ENCODE measurements at regions of chr4 and their contacts with region 1.

Region 1: GRCh38 chr4:152779513-152780266 is at the starts of genes ARFIP1 and TIGD4:
- H3K4me3 Mint-ChIP-seq: peak within 1 kb of the TSS; percentile 99
- H3K27ac Mint-ChIP-seq: peak within 1 kb of the TSS; percentile 98
- H3K4me1 Mint-ChIP-seq: peaks cover 51% of the 10 kb centered on the region
- H3K27me3 Mint-ChIP-seq: peaks cover 2% of the 10 kb centered on the region

Region 2: GRCh38 chr4:152535903-152536544 is 243.7 kb before region 1 on chr4 and contains the start of gene FBXW7:
- intact Hi-C with region 1: loop called (anchors 2 kb)
- H3K4me3 Mint-ChIP-seq: peak within 1 kb of the TSS; percentile 100
- H3K27ac Mint-ChIP-seq: peak within 1 kb of the TSS; percentile 92
- H3K4me1 Mint-ChIP-seq: peaks cover 56% of the 10 kb centered on the region
- H3K27me3 Mint-ChIP-seq: no peaks in the 10 kb centered on the region

Region 3: GRCh38 chr4:152663203-152664066 is 116.3 kb before region 1 on chr4:
- intact Hi-C with region 1: loop called (anchors 10 kb)
- H3K4me3 Mint-ChIP-seq: peak overlapping the region; percentile 65
- H3K27ac Mint-ChIP-seq: peak overlapping the region; percentile 81
- H3K4me1 Mint-ChIP-seq: peaks cover 46% of the 10 kb centered on the region
- H3K27me3 Mint-ChIP-seq: no peaks in the 10 kb centered on the region

Region 4: DNA sequence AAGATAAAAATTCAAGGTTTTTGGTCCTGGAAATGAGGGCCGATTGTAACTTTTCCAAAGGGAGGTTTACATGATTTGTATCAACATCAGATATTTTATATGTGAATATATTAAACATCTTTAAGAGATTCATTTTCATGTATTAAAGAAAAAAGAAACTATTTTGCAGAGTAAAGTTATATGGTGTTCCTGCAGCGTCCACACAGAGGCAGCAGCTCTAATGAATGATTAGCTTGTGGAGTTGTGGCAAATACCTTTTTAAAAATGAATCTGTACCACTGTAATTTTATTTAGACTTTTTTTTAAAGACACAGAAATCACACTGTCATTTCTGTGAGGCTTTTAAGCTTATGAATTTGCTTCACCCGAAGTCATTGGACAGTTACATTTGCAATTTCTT is 130.8 kb after region 1 on chr4:
- intact Hi-C with region 1: no loop called
- H3K4me3 Mint-ChIP-seq: no peak overlapping the region
- H3K27ac Mint-ChIP-seq: no peak overlapping the region
- H3K4me1 Mint-ChIP-seq: peaks cover 11% of the 10 kb centered on the region
- H3K27me3 Mint-ChIP-seq: no peaks in the 10 kb centered on the region

Region 5: DNA sequence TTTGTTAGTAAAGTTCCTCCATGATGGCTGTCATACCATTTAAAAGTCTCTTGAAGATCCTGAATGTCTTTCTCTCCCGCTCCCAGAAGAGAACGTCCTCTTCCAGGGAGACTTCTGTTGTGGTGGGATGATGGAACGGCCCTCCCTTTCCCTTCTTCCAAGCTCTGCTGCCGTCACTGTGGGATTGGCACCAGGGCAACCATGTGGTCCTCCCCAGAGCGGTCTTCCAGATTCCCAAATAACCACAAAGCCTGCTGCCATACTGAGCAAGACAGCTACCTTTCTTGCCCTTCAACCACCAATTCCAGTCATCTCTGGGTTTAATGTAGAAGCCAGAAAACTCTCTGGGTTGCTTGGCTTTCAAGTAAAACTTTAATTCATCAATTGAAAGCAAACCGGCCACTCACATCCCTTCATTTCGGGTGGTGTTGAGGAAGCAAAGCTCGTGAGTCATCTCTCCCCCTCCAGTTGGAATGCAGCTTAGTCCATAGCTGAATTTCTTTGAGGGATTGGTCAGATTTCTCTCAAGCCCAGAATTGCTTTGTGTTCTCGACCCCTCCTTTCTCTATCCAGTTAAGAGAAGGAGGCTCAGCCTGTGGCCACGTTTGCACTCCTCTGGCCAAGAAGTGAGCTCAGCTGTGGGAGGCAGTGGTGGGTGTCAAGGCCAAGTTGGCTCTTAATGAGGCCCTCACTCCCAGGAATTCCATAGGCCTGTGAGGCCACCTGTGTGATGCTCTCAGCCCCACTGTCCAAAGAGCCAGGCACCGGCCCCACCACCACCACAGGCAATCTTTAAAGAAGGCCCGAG is 193.3 kb after region 1 on chr4:
- intact Hi-C with region 1: no loop called
- H3K4me3 Mint-ChIP-seq: no peak overlapping the region
- H3K27ac Mint-ChIP-seq: no peak overlapping the region
- H3K4me1 Mint-ChIP-seq: no peaks in the 10 kb centered on the region
- H3K27me3 Mint-ChIP-seq: no peaks in the 10 kb centered on the region